CD4-positive, alpha-beta T cell (primary cell): ENCODE measurements at regions of chr17 and their contacts with region 1.

Region 1: DNA sequence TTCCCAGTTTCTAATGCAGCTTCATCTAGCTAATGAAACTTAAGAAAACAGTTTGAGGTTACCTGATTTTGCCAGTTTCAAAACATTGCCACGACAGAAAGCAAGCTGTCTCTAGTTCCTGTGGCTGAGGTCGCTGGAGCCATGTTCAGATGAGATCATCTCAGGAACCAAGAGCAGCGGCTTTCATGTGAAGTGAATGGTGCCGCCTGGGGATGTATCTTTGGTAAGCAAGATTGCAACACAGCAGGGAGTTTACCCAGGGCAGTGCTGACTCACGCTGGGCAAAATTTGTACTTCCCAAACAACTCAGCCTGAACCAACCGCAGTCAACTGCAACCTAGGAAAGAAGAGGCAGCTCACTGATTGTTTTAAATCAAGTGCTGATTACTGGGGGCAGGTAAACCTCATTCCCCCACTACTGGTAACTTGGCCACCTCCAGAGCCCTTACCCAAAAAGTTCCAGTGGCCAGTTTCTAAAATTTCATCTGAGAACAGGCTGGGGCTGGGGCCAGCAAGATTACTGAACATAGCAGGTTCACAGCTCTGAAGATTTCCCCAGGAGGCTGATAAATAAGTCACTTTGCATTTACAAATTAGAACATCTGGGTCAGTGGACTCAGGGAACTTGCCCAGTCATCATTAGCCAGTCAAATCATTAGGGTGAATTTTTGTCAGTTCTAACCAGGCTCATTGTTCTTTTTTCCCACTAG is at the start of gene RFFL:
- DNase-seq: peak; percentile 63 to 97 (median 80)
- ATAC-seq: peak; percentile 97
- H3K4me3 ChIP-seq: peak within 1 kb of the TSS; percentile 43
- H3K4me3 Mint-ChIP-seq: peak within 1 kb of the TSS; percentile 82
- H3K27ac ChIP-seq: peak within 1 kb of the TSS; percentile 62 to 63
- H3K27ac Mint-ChIP-seq: peak within 1 kb of the TSS; percentile 88
- H3K4me1 ChIP-seq: peaks cover 40% of the 10 kb centered on the region
- H3K4me1 Mint-ChIP-seq: peaks cover 75% of the 10 kb centered on the region
- H3K27me3 ChIP-seq: no peaks in the 10 kb centered on the region
- H3K27me3 Mint-ChIP-seq: no peaks in the 10 kb centered on the region
- CTCF ChIP-seq: peak; percentile 63
- total RNA-seq, gene RFFL: 57.8 to 66.1 TPM

Region 2: GRCh38 chr17:34024806-34025551 is 1038.7 kb before region 1 on chr17:
- CTCF ChIA-PET with region 1: no interaction called
- POLR2A ChIA-PET with region 1: no interaction called
- intact Hi-C with region 1: no loop called
- DNase-seq: no peak
- ATAC-seq: no peak
- H3K4me3 ChIP-seq: no peak overlapping the region
- H3K4me3 Mint-ChIP-seq: no peak overlapping the region
- H3K27ac ChIP-seq: no peak overlapping the region
- H3K27ac Mint-ChIP-seq: no peak overlapping the region
- H3K4me1 ChIP-seq: no peaks in the 10 kb centered on the region
- H3K4me1 Mint-ChIP-seq: no peaks in the 10 kb centered on the region
- H3K27me3 ChIP-seq: peaks cover 3 to 5% of the 10 kb centered on the region in 2 experiments
- H3K27me3 Mint-ChIP-seq: peaks cover 43% of the 10 kb centered on the region
- CTCF ChIP-seq: no peak

Region 3: GRCh38 chr17:34961093-34961911 is 102.4 kb before region 1 on chr17 and contains the starts of genes CCT6B and ZNF830:
- CTCF ChIA-PET with region 1: no interaction called
- POLR2A ChIA-PET with region 1: interaction called, 10 read pairs
- intact Hi-C with region 1: no loop called
- DNase-seq: peak; percentile 81 to 97 (median 85)
- ATAC-seq: peak; percentile 89
- H3K4me3 ChIP-seq: peak within 1 kb of the TSS; percentile 87
- H3K4me3 Mint-ChIP-seq: peak within 1 kb of the TSS; percentile 100
- H3K27ac ChIP-seq: peak within 1 kb of the TSS; percentile 96
- H3K27ac Mint-ChIP-seq: peak within 1 kb of the TSS; percentile 95
- H3K4me1 ChIP-seq: peaks cover 18% of the 10 kb centered on the region
- H3K4me1 Mint-ChIP-seq: peaks cover 30% of the 10 kb centered on the region
- H3K27me3 ChIP-seq: no peaks in the 10 kb centered on the region
- H3K27me3 Mint-ChIP-seq: peaks cover 8% of the 10 kb centered on the region
- CTCF ChIP-seq: no peak
- total RNA-seq, gene CCT6B: 4.6 to 4.9 TPM
- total RNA-seq, gene ZNF830: 34.4 to 39.0 TPM

Region 4: GRCh38 chr17:34998205-34998604 is 65.5 kb before region 1 on chr17:
- CTCF ChIA-PET with region 1: interaction called, 9 read pairs
- POLR2A ChIA-PET with region 1: interaction called, 11 read pairs
- intact Hi-C with region 1: loop called (anchors 1 kb)
- DNase-seq: peak; percentile 69 to 88 (median 76)
- ATAC-seq: peak; percentile 98
- H3K4me3 ChIP-seq: no peak overlapping the region
- H3K4me3 Mint-ChIP-seq: no peak overlapping the region
- H3K27ac ChIP-seq: no peak overlapping the region
- H3K27ac Mint-ChIP-seq: peak overlapping the region; percentile 72
- H3K4me1 ChIP-seq: peaks cover 8% of the 10 kb centered on the region
- H3K4me1 Mint-ChIP-seq: peaks cover 6% of the 10 kb centered on the region
- H3K27me3 ChIP-seq: no peaks in the 10 kb centered on the region
- H3K27me3 Mint-ChIP-seq: no peaks in the 10 kb centered on the region
- CTCF ChIP-seq: peak; percentile 83

Region 5: GRCh38 chr17:35041390-35041789 is 22.3 kb before region 1 on chr17:
- CTCF ChIA-PET with region 1: interaction called, 13 read pairs
- POLR2A ChIA-PET with region 1: interaction called, 31 read pairs
- intact Hi-C with region 1: loop called (anchors 1 to 2 kb)
- DNase-seq: peak in 1 of 14 experiments; percentile 40
- ATAC-seq: no peak
- H3K4me3 ChIP-seq: no peak overlapping the region
- H3K4me3 Mint-ChIP-seq: no peak overlapping the region
- H3K27ac ChIP-seq: no peak overlapping the region
- H3K27ac Mint-ChIP-seq: no peak overlapping the region
- H3K4me1 ChIP-seq: peaks cover 50% of the 10 kb centered on the region
- H3K4me1 Mint-ChIP-seq: peaks cover 62% of the 10 kb centered on the region
- H3K27me3 ChIP-seq: no peaks in the 10 kb centered on the region
- H3K27me3 Mint-ChIP-seq: no peaks in the 10 kb centered on the region
- CTCF ChIP-seq: no peak

Region 6: DNA sequence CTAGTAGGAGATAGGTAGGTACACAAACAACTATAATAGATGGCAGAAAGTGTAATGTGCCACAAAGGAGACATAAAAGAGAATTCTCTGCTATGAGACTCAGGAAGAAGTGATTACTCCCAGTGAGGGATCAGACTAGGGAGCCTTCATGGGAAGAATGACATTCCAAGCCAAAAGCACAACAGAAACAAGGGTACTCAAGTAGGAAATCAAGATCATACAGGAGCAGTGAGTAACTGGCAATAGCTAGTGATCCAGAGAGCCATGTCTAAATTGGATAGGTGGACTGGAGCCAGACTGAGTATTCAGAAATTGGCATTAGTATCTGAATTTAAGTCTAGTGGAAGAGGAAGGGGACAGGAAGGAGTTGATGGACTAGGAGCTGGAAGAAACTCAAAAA is 10.9 kb before region 1 on chr17:
- CTCF ChIA-PET with region 1: interaction called, 14 read pairs
- POLR2A ChIA-PET with region 1: interaction called, 77 read pairs
- intact Hi-C with region 1: loop called (anchors 1 kb)
- DNase-seq: no peak
- ATAC-seq: no peak
- H3K4me3 ChIP-seq: no peak overlapping the region
- H3K4me3 Mint-ChIP-seq: peak overlapping the region; percentile 69
- H3K27ac ChIP-seq: peak overlapping the region; percentile 78 to 85
- H3K27ac Mint-ChIP-seq: peak overlapping the region; percentile 92
- H3K4me1 ChIP-seq: peaks cover 86% of the 10 kb centered on the region
- H3K4me1 Mint-ChIP-seq: peaks cover 76% of the 10 kb centered on the region
- H3K27me3 ChIP-seq: no peaks in the 10 kb centered on the region
- H3K27me3 Mint-ChIP-seq: no peaks in the 10 kb centered on the region
- CTCF ChIP-seq: no peak

Region 7: DNA sequence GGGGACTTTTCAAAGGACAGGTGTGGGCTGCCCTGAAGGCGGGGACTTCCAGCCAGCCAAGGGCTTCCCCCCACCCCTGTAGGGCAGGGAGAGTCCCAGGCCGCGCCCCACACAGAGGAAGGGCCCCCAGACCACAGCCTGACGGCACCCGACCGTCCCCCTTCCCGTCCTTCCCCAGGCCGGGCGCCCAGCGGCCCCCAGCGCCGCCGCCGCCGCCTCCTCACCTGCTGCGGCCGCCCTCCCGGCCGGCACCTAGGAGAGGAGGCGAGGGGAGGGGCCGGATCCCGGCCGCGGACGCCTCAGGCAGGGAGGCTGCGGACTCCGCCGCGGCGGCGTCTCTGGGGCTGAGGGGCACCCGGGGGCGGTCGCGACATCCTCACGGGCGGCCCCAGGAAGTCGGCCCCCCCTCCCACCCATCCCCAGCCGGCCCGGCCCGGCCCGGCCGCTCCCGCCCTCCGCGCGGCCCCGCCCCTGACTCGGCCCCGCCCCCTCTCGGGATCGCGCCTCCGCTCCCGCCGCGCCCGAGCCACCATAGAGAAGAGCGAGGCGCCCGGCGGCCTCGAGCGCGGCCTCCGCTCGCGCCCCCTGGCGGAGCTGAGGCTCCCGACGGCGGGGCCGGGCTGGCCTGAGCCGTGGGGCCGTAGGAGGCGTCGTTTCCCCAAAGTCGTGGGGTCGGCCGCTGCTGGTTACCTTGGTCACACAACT is 25.4 kb after region 1 on chr17:
- CTCF ChIA-PET with region 1: interaction called, 27 read pairs
- POLR2A ChIA-PET with region 1: interaction called, 12 read pairs
- intact Hi-C with region 1: loop called in 1 of 2 experiments (anchors 1 kb)
- DNase-seq: peak; percentile 80 to 96 (median 89)
- ATAC-seq: peak; percentile 74
- H3K4me3 ChIP-seq: peak overlapping the region; percentile 92
- H3K4me3 Mint-ChIP-seq: peak overlapping the region; percentile 99
- H3K27ac ChIP-seq: peak overlapping the region; percentile 88 to 94
- H3K27ac Mint-ChIP-seq: peak overlapping the region; percentile 98
- H3K4me1 ChIP-seq: peaks cover 46% of the 10 kb centered on the region
- H3K4me1 Mint-ChIP-seq: peaks cover 58% of the 10 kb centered on the region
- H3K27me3 ChIP-seq: no peaks in the 10 kb centered on the region
- H3K27me3 Mint-ChIP-seq: no peaks in the 10 kb centered on the region
- CTCF ChIP-seq: peak; percentile 72

Region 8: GRCh38 chr17:35161281-35161761 is 97.7 kb after region 1 on chr17:
- CTCF ChIA-PET with region 1: no interaction called
- POLR2A ChIA-PET with region 1: no interaction called
- intact Hi-C with region 1: no loop called
- DNase-seq: peak in 6 of 14 experiments; percentile 15 to 78 (median 56)
- ATAC-seq: peak; percentile 70
- H3K4me3 ChIP-seq: peak overlapping the region; percentile 30
- H3K4me3 Mint-ChIP-seq: peak overlapping the region; percentile 67
- H3K27ac ChIP-seq: peak overlapping the region; percentile 62 to 68
- H3K27ac Mint-ChIP-seq: peak overlapping the region; percentile 89
- H3K4me1 ChIP-seq: peaks cover 53% of the 10 kb centered on the region
- H3K4me1 Mint-ChIP-seq: peaks cover 66% of the 10 kb centered on the region
- H3K27me3 ChIP-seq: no peaks in the 10 kb centered on the region
- H3K27me3 Mint-ChIP-seq: no peaks in the 10 kb centered on the region
- CTCF ChIP-seq: no peak